ENCODE measurements at regions of chr2 and their contacts with region 1.

Region 1: GRCh38 chr2:191521608-191522208 is 156.2 kb upstream of the NABP1 start:
- DNase-seq: no peak
- H3K4me3 ChIP-seq: no peak overlapping the region
- H3K27ac ChIP-seq: no peak overlapping the region
- H3K27me3 ChIP-seq: no peaks in the 10 kb centered on the region
- CTCF ChIP-seq: peak; percentile 79

Region 2: DNA sequence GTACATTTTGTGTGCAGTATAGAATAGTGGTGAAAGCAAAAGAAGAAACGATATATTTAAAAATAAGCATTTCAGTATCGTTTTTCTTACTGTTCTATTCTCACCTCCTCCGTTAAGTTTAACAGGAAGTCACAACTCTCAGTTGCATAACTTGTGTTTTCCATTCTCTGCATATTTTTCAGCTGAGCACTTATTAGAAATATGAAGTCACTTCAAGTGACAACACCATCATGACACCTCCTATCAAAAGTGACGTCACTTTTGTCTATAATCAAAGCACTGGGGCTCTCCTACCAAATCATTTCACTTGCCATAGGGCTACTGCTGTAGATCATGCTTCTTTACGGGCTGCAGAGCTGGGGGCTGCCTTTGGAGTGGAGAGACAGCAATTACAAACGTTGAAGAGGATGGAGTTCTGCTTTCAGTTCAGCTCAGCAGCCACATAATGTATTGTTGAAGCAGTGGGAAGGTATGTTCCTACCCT is 407.3 kb before region 1 on chr2:
- CTCF ChIA-PET with region 1: no interaction called
- POLR2A ChIA-PET with region 1: no interaction called
- DNase-seq: no peak
- H3K4me3 ChIP-seq: no peak overlapping the region
- H3K27ac ChIP-seq: no peak overlapping the region
- H3K27me3 ChIP-seq: no peaks in the 10 kb centered on the region
- CTCF ChIP-seq: no peak

Region 3: DNA sequence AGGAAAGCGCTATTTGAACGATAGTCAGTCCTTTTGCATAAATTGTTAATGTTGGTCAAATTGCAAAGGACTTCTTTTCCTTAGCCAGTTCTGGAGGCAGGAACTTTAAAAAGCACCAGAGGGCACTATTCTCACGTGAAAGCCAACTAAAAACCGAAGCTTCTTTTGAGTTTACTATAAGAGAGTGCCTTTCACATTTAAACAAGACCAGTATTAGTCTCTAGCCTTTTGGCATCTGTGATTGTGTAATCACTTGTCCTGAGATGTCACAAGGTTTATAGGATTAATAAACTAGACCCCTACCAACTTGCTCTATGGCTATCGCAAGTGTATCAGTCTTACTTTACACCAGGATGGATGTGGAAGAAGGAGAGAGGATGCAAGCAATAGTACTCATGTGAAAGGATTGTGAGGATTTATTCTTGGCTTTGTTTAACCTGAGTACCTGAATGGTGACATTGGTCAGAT is 356.5 kb before region 1 on chr2:
- CTCF ChIA-PET with region 1: interaction called, 121 read pairs
- POLR2A ChIA-PET with region 1: interaction called, 3 read pairs
- DNase-seq: no peak
- H3K4me3 ChIP-seq: no peak overlapping the region
- H3K27ac ChIP-seq: no peak overlapping the region
- H3K27me3 ChIP-seq: no peaks in the 10 kb centered on the region
- CTCF ChIP-seq: peak; percentile 81

Region 4: GRCh38 chr2:191171708-191172355 is 349.9 kb before region 1 on chr2:
- CTCF ChIA-PET with region 1: interaction called, 121 read pairs
- POLR2A ChIA-PET with region 1: interaction called, 3 read pairs
- DNase-seq: peak; percentile 81
- H3K4me3 ChIP-seq: no peak overlapping the region
- H3K27ac ChIP-seq: peak overlapping the region; percentile 81
- H3K27me3 ChIP-seq: no peaks in the 10 kb centered on the region
- CTCF ChIP-seq: no peak

Region 5: DNA sequence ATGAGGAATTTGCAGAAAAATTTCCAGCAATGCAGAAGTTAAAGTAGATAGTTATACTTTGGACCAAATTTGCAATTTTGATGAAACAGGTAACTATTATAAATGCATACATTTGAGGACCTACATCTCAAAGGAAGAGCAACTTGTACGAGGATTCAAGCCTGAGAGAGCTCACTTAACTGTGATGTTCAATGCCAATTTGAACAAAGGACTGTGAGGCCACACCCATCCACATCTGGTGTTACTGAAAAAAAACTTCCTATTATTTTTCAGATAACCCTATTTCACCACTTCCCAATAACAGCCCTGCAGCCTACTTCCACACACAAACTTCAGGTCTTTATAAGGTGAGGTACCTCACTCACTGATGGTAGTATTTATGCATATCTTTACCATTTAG is 47.2 kb before region 1 on chr2:
- CTCF ChIA-PET with region 1: no interaction called
- POLR2A ChIA-PET with region 1: no interaction called
- DNase-seq: no peak
- H3K4me3 ChIP-seq: no peak overlapping the region
- H3K27ac ChIP-seq: no peak overlapping the region
- H3K27me3 ChIP-seq: no peaks in the 10 kb centered on the region
- CTCF ChIP-seq: no peak

Region 6: GRCh38 chr2:191508738-191509137 is 13.0 kb before region 1 on chr2:
- CTCF ChIA-PET with region 1: interaction called, 21 read pairs
- POLR2A ChIA-PET with region 1: no interaction called
- DNase-seq: no peak
- H3K4me3 ChIP-seq: no peak overlapping the region
- H3K27ac ChIP-seq: no peak overlapping the region
- H3K27me3 ChIP-seq: no peaks in the 10 kb centered on the region
- CTCF ChIP-seq: no peak

Region 7: GRCh38 chr2:191539068-191539467 is 17.4 kb after region 1 on chr2:
- CTCF ChIA-PET with region 1: interaction called, 28 read pairs
- POLR2A ChIA-PET with region 1: no interaction called
- DNase-seq: no peak
- H3K4me3 ChIP-seq: no peak overlapping the region
- H3K27ac ChIP-seq: no peak overlapping the region
- H3K27me3 ChIP-seq: peaks cover 4% of the 10 kb centered on the region
- CTCF ChIP-seq: peak; percentile 76